Heart right ventricle (tissue), 16 donors: ENCODE measurements at regions of chr1 and their contacts with region 1.

Region 1: DNA sequence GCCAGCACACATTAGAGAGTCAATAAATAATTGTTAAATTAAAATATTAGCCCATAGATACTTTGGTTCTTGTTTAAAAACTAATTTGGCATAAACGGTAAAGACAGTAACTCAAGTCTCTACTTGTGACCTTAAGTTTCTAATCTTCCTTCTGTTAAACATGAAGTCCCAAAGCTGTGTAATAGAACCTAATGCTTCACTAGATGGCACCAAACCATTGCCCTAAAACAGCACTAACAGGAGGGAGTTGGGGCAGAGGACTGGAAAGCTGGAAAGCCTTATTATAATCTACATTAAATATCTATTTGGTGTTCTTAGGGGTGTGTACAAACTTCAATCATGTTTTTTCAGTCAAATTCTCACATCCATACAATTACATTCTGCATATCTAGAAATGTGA is 176.7 kb downstream of the OLFM3 start:
- DNase-seq: peak in 1 of 2 donors; percentile 4
- ATAC-seq: peak in 4 of 8 donors; percentile 49 to 61 (median 58)
- H3K4me3 ChIP-seq: no peak overlapping the region
- H3K27ac ChIP-seq: no peak overlapping the region
- H3K4me1 ChIP-seq: no peaks in the 10 kb centered on the region
- H3K27me3 ChIP-seq: no peaks in the 10 kb centered on the region
- CTCF ChIP-seq: peak in 8 of 9 donors; percentile 18 to 66 (median 54)

Region 2: GRCh38 chr1:101964708-101965107 is 144.6 kb after region 1 on chr1:
- intact Hi-C with region 1: loop called in 2 of 10 experiments (anchors 10 kb)
- DNase-seq: no peak
- ATAC-seq: no peak
- H3K4me3 ChIP-seq: no peak overlapping the region
- H3K27ac ChIP-seq: no peak overlapping the region
- H3K4me1 ChIP-seq: no peaks in the 10 kb centered on the region
- H3K27me3 ChIP-seq: no peaks in the 10 kb centered on the region
- CTCF ChIP-seq: no peak

Region 3: DNA sequence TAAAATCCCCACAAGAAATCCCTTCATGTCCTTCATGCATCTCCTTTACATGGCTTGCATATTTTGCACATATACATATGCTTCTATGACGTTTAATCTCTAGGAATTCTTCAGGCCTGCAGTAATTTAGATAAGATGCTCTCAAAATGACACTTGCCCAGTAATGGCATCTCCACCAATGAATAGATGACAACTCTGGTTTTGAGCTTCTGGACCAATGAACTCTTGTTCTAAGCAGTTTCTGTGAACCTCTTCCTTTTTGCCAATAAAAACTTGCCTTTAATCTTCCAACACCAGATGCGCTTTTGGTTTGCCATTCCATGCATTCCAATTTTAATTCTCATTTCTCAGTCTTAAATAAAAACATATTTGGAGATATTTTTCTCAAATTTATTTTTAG is 366.5 kb after region 1 on chr1:
- intact Hi-C with region 1: loop called in 7 of 10 experiments (anchors 2 to 10 kb)
- DNase-seq: no peak
- ATAC-seq: no peak
- H3K4me3 ChIP-seq: no peak overlapping the region
- H3K27ac ChIP-seq: no peak overlapping the region
- H3K4me1 ChIP-seq: no peaks in the 10 kb centered on the region
- H3K27me3 ChIP-seq: no peaks in the 10 kb centered on the region
- CTCF ChIP-seq: no peak

Region 4: GRCh38 chr1:102191723-102192122 is 371.7 kb after region 1 on chr1:
- intact Hi-C with region 1: loop called in 7 of 10 experiments (anchors 2 to 10 kb)
- DNase-seq: peak in 1 of 2 donors; percentile 13
- ATAC-seq: peak in 6 of 8 donors; percentile 38 to 81 (median 72)
- H3K4me3 ChIP-seq: no peak overlapping the region
- H3K27ac ChIP-seq: no peak overlapping the region
- H3K4me1 ChIP-seq: no peaks in the 10 kb centered on the region
- H3K27me3 ChIP-seq: no peaks in the 10 kb centered on the region
- CTCF ChIP-seq: peak in 7 of 9 donors; percentile 32 to 58 (median 44)